Activated CD4-positive, alpha-beta memory T cell treated with anti-CD3 and anti-CD28 coated beads for 36 hours (primary cell): ENCODE measurements at regions of chr19 and their contacts with region 1.

Region 1: GRCh38 chr19:11242864-11243797 is 3.7 kb downstream of the ANGPTL8 start:
- DNase-seq: peak; percentile 91
- H3K4me3 Mint-ChIP-seq: no peak overlapping the region
- H3K27ac Mint-ChIP-seq: no peak overlapping the region
- H3K4me1 Mint-ChIP-seq: peaks cover 8% of the 10 kb centered on the region
- H3K27me3 Mint-ChIP-seq: peaks cover 15% of the 10 kb centered on the region

Region 2: GRCh38 chr19:11482384-11483050 is 239.4 kb after region 1 on chr19:
- CTCF ChIA-PET with region 1: interaction called, 15 read pairs
- POLR2A ChIA-PET with region 1: no interaction called
- intact Hi-C with region 1: no loop called
- DNase-seq: peak; percentile 91
- H3K4me3 Mint-ChIP-seq: peak overlapping the region; percentile 70
- H3K27ac Mint-ChIP-seq: peak overlapping the region; percentile 52
- H3K4me1 Mint-ChIP-seq: peaks cover 19% of the 10 kb centered on the region
- H3K27me3 Mint-ChIP-seq: peaks cover 17% of the 10 kb centered on the region